ENCODE measurements at regions of chr5 and their contacts with region 1.

Region 1: DNA sequence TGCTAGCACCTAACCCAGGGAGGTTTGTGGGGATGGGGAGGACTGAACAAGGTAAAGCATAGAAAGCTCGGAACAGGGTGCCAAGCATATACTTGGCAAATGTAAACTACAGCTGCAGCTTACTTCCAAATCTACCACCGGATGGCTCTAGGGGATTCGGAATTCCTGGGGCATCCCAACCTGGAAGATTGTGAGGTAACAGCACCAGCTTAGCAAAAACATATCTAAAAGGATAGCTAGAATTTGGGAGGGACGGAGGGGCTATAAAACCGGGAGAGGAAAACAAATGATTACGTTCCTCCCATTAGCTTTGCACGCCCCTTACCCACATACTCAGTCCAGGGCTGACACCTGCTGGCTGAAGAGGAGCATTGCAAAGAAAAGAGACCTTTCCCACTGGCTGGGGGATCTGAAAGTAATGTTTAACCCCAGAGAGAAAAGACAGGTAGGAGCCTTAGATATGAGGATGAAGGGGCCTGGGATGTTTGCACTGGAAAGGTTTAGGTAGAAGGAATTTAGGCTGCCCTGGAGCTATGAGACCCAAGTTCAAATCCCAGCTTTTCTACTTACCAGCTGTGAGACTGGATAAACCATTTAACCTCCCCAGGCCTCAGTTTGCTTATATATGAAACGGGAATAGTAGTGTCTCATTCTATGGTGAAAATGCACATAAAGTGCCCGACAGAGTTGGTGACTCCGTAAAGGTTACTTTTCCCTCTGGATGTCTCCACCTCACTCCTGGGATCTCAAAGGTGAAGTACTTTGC is 73.6 kb downstream of the FAM114A2 start:
- DNase-seq: peak; percentile 78

Region 2: DNA sequence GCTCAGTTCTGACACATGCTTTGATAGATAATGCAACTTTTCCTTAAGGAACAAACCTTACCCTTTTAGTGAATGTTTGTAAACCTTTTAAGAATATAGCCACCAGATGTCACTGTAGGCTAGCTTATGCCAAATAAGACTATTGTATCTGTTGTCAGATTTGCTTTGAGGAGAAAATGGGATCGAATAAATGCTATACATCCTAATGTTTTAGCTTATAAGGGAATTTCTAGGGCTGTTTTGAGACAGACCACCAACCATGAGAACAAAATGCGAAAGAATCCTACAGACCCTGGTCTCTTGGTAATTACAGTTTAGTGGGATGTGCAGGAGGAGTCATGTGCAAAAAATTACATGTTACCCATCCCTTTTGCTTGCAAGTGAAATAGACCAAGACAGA is 1432.3 kb before region 1 on chr5:
- CTCF ChIA-PET with region 1: interaction called, 32 read pairs
- POLR2A ChIA-PET with region 1: no interaction called
- DNase-seq: peak; percentile 31

Region 3: GRCh38 chr5:153496835-153497234 is 468.2 kb before region 1 on chr5:
- CTCF ChIA-PET with region 1: interaction called, 14 read pairs
- POLR2A ChIA-PET with region 1: no interaction called
- DNase-seq: peak; percentile 16

Region 4: GRCh38 chr5:153985498-153985897 is 20.4 kb after region 1 on chr5:
- CTCF ChIA-PET with region 1: no interaction called
- POLR2A ChIA-PET with region 1: no interaction called
- DNase-seq: no peak

Measured in HEK293T (cell line).